Activated CD8-positive, alpha-beta memory T cell treated with anti-CD3 and anti-CD28 coated beads, Interleukin-2, amount 10 ng/mL, durations not matched to agents 7 days and 5 days (primary cell): ENCODE measurements at regions of chr15 and their contacts with region 1.

Region 1: GRCh38 chr15:69452692-69453521 is at the start of gene RPLP1:
- DNase-seq: peak; percentile 96
- ATAC-seq: peak; percentile 87
- H3K4me3 Mint-ChIP-seq: peak within 1 kb of the TSS; percentile 97
- H3K27ac Mint-ChIP-seq: peak within 1 kb of the TSS; percentile 99
- H3K4me1 Mint-ChIP-seq: peaks cover 36% of the 10 kb centered on the region
- H3K27me3 Mint-ChIP-seq: no peaks in the 10 kb centered on the region
- total RNA-seq, gene RPLP1: 1,405 to 1,605 TPM

Region 2: DNA sequence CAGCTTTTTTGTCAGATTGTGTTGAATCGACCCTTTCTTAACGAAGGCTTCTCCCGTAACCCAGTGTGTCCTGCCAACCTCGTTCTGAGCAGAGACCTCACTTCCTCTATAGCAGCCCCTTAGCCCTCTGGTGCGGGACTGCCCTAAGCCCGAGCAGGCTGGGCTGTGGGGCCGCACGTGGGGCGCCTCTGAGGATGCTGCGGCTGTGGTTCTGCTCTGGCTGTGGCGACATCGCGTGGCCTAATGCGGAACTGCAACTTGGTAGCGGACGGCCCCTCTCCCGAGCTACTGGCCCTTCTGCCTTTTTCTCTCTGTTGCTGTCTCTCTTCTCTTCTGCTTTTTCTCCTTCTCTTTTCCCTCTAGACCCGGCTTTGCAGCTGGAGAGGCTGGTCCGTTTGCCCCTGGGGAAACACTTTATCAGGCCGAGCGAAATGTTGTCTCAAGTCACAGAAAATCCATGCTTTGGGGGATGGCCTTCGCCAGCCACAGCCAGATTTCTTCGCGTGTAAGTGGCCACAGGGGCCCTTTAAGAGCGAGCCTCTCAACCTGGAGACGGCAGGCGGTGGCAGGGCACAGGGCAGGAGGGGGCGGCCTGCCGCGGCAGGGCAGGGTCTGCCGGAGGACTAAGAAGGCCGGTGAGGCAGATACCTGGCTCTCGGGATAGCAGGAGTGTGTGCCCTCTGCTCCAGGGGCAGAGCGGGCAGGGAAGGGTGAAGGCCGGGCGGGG is 58.2 kb before region 1 on chr15:
- CTCF ChIA-PET with region 1: no interaction called
- DNase-seq: peak; percentile 83
- ATAC-seq: peak; percentile 89
- H3K4me3 Mint-ChIP-seq: no peak overlapping the region
- H3K27ac Mint-ChIP-seq: no peak overlapping the region
- H3K4me1 Mint-ChIP-seq: peaks cover 9% of the 10 kb centered on the region
- H3K27me3 Mint-ChIP-seq: peaks cover 10% of the 10 kb centered on the region

Region 3: DNA sequence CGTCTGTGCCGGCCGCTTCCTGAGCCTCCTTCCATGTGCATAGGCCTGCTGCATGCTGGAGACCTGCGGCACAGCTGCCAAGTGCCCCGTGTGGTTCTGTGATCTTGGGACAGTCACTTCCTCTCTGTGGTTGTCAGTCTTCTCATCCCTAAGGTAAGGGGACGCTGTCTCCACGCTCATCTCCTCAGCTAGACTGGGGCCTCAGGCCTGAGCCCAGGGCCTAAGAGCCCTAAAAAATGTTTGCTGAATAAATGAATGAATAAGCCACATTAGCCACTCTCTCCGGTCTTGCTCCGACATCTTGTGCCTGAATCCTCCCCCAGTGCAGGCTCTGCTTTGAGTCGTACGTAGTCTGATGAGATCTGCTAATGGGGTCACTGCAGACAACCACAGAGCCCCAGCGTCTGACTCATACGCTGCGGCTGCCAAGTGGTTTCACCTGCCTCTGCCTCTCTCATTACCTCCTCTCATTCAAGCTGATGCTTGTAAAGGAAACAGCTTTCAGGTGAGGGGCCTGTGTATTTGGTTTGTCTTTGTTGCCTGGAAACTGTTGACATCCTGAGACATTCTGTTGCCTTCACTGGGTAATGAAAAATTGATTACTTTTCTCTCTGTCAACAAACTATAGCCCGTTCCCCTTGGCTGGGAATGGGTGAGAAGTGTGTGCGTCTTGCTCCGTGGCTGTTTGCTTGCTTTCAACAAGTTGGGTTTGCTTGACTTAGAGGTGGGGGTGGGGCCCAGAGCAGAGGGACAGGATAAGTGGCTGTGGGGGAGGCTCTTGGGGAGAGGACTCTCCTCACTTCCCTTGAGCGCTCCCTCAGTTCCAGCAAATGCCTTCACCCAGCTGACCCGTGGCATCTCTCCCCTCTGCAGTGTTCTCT is 15.6 kb after region 1 on chr15:
- CTCF ChIA-PET with region 1: interaction called, 78 read pairs
- DNase-seq: peak; percentile 95
- ATAC-seq: peak; percentile 93
- H3K4me3 Mint-ChIP-seq: peak overlapping the region; percentile 50
- H3K27ac Mint-ChIP-seq: peak overlapping the region; percentile 83
- H3K4me1 Mint-ChIP-seq: peaks cover 35% of the 10 kb centered on the region
- H3K27me3 Mint-ChIP-seq: peaks cover 44% of the 10 kb centered on the region